Activated B cell treated with CpG ODN at 0.5 μM for 24 hours (primary cell): ENCODE measurements at regions of chr12 and their contacts with region 1.

Region 1: GRCh38 chr12:128644664-128645296 is 179.0 kb downstream of the SLC15A4 start:
- DNase-seq: peak; percentile 30
- ATAC-seq: no peak
- H3K4me3 Mint-ChIP-seq: no peak overlapping the region
- H3K27ac Mint-ChIP-seq: no peak overlapping the region
- H3K4me1 Mint-ChIP-seq: no peaks in the 10 kb centered on the region
- H3K27me3 Mint-ChIP-seq: no peaks in the 10 kb centered on the region
- CTCF ChIP-seq: peak; percentile 64

Region 2: GRCh38 chr12:128789356-128789929 is 144.7 kb after region 1 on chr12:
- CTCF ChIA-PET with region 1: no interaction called
- POLR2A ChIA-PET with region 1: no interaction called
- intact Hi-C with region 1: no loop called
- DNase-seq: no peak
- ATAC-seq: peak; percentile 65
- H3K4me3 Mint-ChIP-seq: peak overlapping the region; percentile 49
- H3K27ac Mint-ChIP-seq: peak overlapping the region; percentile 77
- H3K4me1 Mint-ChIP-seq: peaks cover 74% of the 10 kb centered on the region
- H3K27me3 Mint-ChIP-seq: no peaks in the 10 kb centered on the region
- CTCF ChIP-seq: no peak

Region 3: GRCh38 chr12:128914908-128915563 is 270.3 kb after region 1 on chr12:
- CTCF ChIA-PET with region 1: no interaction called
- POLR2A ChIA-PET with region 1: no interaction called
- intact Hi-C with region 1: no loop called
- DNase-seq: no peak
- ATAC-seq: peak; percentile 75
- H3K4me3 Mint-ChIP-seq: no peak overlapping the region
- H3K27ac Mint-ChIP-seq: no peak overlapping the region
- H3K4me1 Mint-ChIP-seq: peaks cover 7% of the 10 kb centered on the region
- H3K27me3 Mint-ChIP-seq: peaks cover 2% of the 10 kb centered on the region
- CTCF ChIP-seq: no peak

Region 4: GRCh38 chr12:130013771-130014484 is 1369.1 kb after region 1 on chr12:
- CTCF ChIA-PET with region 1: interaction called, 12 read pairs
- POLR2A ChIA-PET with region 1: no interaction called
- intact Hi-C with region 1: no loop called
- DNase-seq: no peak
- ATAC-seq: no peak
- H3K4me3 Mint-ChIP-seq: no peak overlapping the region
- H3K27ac Mint-ChIP-seq: no peak overlapping the region
- H3K4me1 Mint-ChIP-seq: no peaks in the 10 kb centered on the region
- H3K27me3 Mint-ChIP-seq: peaks cover 6% of the 10 kb centered on the region
- CTCF ChIP-seq: no peak

Region 5: GRCh38 chr12:130031571-130032189 is 1386.9 kb after region 1 on chr12:
- CTCF ChIA-PET with region 1: interaction called, 3 read pairs
- POLR2A ChIA-PET with region 1: no interaction called
- intact Hi-C with region 1: loop called (anchors 1 kb)
- DNase-seq: peak; percentile 49
- ATAC-seq: no peak
- H3K4me3 Mint-ChIP-seq: no peak overlapping the region
- H3K27ac Mint-ChIP-seq: no peak overlapping the region
- H3K4me1 Mint-ChIP-seq: no peaks in the 10 kb centered on the region
- H3K27me3 Mint-ChIP-seq: peaks cover 4% of the 10 kb centered on the region
- CTCF ChIP-seq: peak; percentile 30